ENCODE measurements at regions of chrX and their contacts with region 1.

Region 1: DNA sequence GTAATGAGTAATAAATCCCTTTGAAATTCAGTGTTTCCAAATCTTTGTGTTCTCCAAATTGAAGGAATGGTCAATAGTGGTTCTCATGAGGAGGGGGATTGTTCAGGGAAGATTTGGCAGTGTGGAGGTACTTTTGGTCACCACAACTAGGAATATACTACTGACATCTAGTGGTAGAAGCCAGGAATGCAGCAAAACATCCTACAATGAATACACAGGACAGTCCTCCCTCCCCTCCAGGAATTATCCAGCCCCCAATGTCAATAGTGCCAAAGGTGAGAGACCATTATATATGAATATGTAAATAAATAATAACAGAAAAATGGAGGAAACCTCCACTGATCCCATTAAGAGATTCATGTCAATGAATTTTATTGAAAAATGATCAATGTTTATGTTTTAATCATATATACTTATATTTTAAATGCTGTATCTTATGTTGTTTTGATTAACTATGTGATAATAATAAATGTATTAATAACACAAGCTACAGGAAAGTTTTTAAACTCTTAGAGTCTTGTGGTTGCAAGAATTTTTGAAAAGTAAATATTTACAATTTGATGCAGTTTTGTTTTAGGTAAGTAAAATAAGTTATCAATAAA is 14.4 kb upstream of the FAM9A start:
- DNase-seq: no peak
- H3K4me3 ChIP-seq: no peak overlapping the region
- H3K27ac ChIP-seq: no peak overlapping the region
- H3K4me1 ChIP-seq: no peaks in the 10 kb centered on the region
- H3K27me3 ChIP-seq: no peaks in the 10 kb centered on the region
- CTCF ChIP-seq: peak; percentile 18 to 54 (median 39)
- EP300 ChIP-seq: no peak
- POLR2A ChIP-seq: no peak

Region 2: DNA sequence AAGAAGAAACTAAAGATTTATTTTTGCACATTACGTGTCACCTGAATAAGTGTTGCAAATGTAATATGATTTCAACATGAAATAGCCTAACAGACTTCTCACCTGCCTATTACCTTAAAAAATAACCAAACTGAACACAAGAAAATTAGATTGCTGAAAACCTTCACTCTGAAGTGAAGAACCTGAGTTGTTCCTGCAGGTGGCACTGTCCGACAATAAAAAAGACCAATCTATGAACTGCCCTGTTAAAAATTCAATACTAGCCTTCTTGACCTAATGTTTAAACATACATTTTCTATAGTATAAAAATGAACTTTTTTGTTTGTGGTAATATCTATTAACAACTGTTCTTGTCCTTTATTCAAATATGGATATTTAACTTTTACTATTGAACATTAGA is 819.2 kb before region 1 on chrX:
- intact Hi-C with region 1: loop called (anchors 5 kb)
- DNase-seq: no peak
- H3K4me3 ChIP-seq: no peak overlapping the region
- H3K27ac ChIP-seq: no peak overlapping the region
- H3K4me1 ChIP-seq: no peaks in the 10 kb centered on the region
- H3K27me3 ChIP-seq: no peaks in the 10 kb centered on the region
- CTCF ChIP-seq: peak in 3 of 4 experiments; percentile 23 to 49 (median 24)
- EP300 ChIP-seq: no peak
- POLR2A ChIP-seq: no peak

Region 3: GRCh38 chrX:8743126-8743732 is 72.3 kb before region 1 on chrX:
- intact Hi-C with region 1: loop called (anchors 10 kb)
- DNase-seq: no peak
- H3K4me3 ChIP-seq: no peak overlapping the region
- H3K27ac ChIP-seq: no peak overlapping the region
- H3K4me1 ChIP-seq: no peaks in the 10 kb centered on the region
- H3K27me3 ChIP-seq: no peaks in the 10 kb centered on the region
- CTCF ChIP-seq: peak in 3 of 4 experiments; percentile 21 to 46 (median 29)
- EP300 ChIP-seq: no peak
- POLR2A ChIP-seq: no peak

Region 4: GRCh38 chrX:8879750-8880149 is 64.2 kb after region 1 on chrX:
- intact Hi-C with region 1: no loop called
- DNase-seq: no peak
- H3K4me3 ChIP-seq: no peak overlapping the region
- H3K27ac ChIP-seq: no peak overlapping the region
- H3K4me1 ChIP-seq: no peaks in the 10 kb centered on the region
- H3K27me3 ChIP-seq: no peaks in the 10 kb centered on the region
- CTCF ChIP-seq: no peak
- EP300 ChIP-seq: no peak
- POLR2A ChIP-seq: no peak

Region 5: GRCh38 chrX:9690046-9690445 is 874.5 kb after region 1 on chrX:
- intact Hi-C with region 1: loop called (anchors 5 kb)
- DNase-seq: peak; percentile 1
- H3K4me3 ChIP-seq: no peak overlapping the region
- H3K27ac ChIP-seq: no peak overlapping the region
- H3K4me1 ChIP-seq: no peaks in the 10 kb centered on the region
- H3K27me3 ChIP-seq: no peaks in the 10 kb centered on the region
- CTCF ChIP-seq: no peak
- EP300 ChIP-seq: no peak
- POLR2A ChIP-seq: no peak

Region 6: DNA sequence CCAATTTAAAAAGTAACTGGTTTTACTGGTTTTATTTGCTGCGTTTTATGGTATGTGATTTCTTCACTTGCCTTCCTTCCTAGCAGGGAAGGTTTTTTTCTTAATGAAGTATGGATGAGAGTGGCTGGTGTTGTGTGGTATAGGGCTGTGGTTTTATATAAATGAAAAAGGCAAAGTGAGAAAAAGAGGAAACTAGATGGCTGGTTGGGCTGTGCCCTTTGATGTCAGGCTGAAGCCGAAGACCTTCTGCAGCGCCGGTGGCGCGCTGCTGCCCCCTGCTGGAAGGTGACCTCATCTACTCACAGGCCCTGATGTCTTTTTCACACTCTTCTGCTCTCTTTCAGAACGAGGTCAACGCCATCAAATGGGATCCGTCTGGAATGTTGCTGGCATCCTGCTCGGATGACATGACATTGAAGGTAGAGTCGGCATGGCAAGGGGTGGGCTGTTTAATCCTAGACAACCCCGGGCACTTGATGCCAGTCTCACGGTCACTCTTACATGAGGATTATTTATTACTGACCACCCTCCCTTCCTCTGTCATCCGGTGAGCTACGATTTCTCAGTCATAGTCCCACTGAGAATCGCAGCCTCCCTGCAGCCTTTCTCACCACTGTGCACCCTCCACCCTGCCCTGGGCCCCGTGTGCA is 893.5 kb after region 1 on chrX:
- intact Hi-C with region 1: loop called (anchors 5 kb)
- DNase-seq: peak; percentile 82
- H3K4me3 ChIP-seq: no peak overlapping the region
- H3K27ac ChIP-seq: no peak overlapping the region
- H3K4me1 ChIP-seq: no peaks in the 10 kb centered on the region
- H3K27me3 ChIP-seq: no peaks in the 10 kb centered on the region
- CTCF ChIP-seq: peak; percentile 35 to 70 (median 56)
- EP300 ChIP-seq: no peak
- POLR2A ChIP-seq: no peak

Region 7: DNA sequence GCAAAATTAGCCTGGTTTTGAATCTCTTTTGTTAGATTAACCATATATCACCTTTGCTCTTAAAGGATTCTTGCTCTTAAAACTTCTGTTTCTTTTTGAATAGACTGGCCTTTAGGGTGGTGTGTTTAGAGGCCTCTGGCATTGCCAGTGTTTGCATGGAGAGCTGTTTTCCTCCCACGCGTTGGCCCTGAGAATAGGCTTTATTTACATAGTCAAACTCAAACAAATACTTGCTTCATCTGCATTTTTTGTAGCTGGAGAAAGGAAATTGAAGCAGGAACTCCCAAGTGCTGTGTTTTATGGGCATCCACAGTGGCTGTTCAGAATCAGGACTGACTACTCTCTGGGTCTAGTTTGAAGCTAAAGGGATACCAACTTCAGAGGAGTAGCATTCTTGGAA is 973.3 kb after region 1 on chrX:
- intact Hi-C with region 1: no loop called
- DNase-seq: no peak
- H3K4me3 ChIP-seq: no peak overlapping the region
- H3K27ac ChIP-seq: no peak overlapping the region
- H3K4me1 ChIP-seq: peaks cover 0 to 6% (median 2%) of the 10 kb centered on the region in 4 donors
- H3K27me3 ChIP-seq: peaks cover 0 to 6% (median 0%) of the 10 kb centered on the region in 3 donors
- CTCF ChIP-seq: no peak
- EP300 ChIP-seq: no peak
- POLR2A ChIP-seq: no peak